ENCODE measurements at regions of chr16 and their contacts with region 1.

Region 1: GRCh38 chr16:46830902-46831647 is at the start of gene C16orf87:
- DNase-seq: peak; percentile 81 to 96 (median 90)
- ATAC-seq: peak; percentile 91
- H3K4me3 ChIP-seq: peak within 1 kb of the TSS; percentile 87
- H3K4me3 Mint-ChIP-seq: peak within 1 kb of the TSS; percentile 98
- H3K27ac ChIP-seq: peak within 1 kb of the TSS; percentile 45 to 61
- H3K27ac Mint-ChIP-seq: peak within 1 kb of the TSS; percentile 89
- H3K4me1 ChIP-seq: peaks cover 11% of the 10 kb centered on the region
- H3K4me1 Mint-ChIP-seq: peaks cover 36% of the 10 kb centered on the region
- H3K27me3 ChIP-seq: no peaks in the 10 kb centered on the region
- H3K27me3 Mint-ChIP-seq: no peaks in the 10 kb centered on the region
- CTCF ChIP-seq: no peak
- total RNA-seq, gene C16orf87: 20.6 to 22.6 TPM

Region 2: DNA sequence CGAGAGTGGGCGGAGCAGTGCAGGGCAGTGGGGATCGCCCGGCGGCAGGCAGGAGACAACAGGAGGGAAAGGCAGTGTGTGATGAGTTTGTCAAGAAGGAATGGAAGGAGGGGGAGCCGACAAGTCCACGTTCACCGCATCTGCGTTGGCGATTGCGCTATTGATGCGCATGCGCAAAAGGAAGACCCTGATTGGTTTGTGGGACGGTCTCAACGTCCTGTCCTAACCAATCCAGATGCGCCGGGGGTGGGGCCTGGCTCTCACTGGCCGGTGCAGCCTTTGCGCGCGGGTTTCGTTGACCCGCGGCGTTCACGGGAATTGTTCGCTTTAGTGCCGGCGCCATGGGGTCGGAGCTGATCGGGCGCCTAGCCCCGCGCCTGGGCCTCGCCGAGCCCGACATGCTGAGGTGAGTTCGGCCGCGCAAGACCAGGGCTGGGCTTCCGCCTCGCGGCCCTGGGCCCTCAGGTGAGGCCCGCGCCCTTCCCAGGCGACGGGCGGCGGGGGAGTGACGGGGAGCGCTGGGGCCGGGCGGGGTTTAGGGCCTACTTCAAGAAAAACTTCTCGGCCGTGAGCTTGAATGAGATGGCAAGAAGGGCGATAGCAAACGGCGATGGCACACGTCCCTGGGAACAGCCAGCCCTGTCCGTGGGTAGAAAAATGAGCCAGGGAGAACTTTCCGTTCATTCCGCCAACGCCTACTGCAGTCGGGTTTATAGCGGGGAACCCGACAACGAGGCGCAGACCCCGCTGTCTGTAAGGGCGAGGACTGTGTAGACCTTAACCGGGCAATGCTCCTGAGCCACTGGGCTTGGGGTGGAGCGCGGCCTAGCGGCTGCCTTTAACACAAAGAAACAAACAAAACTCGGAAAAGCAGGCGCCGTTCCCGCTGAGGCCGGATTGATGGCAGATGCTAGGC is 141.5 kb before region 1 on chr16 and contains the start of gene ORC6:
- CTCF ChIA-PET with region 1: no interaction called
- POLR2A ChIA-PET with region 1: interaction called, 3 read pairs
- intact Hi-C with region 1: loop called (anchors 1 to 2 kb)
- DNase-seq: peak; percentile 92 to 97 (median 96)
- ATAC-seq: peak; percentile 72
- H3K4me3 ChIP-seq: peak within 1 kb of the TSS; percentile 94
- H3K4me3 Mint-ChIP-seq: no peak within 1 kb of the TSS
- H3K27ac ChIP-seq: peak within 1 kb of the TSS; percentile 91 to 98
- H3K27ac Mint-ChIP-seq: no peak within 1 kb of the TSS
- H3K4me1 ChIP-seq: peaks cover 23% of the 10 kb centered on the region
- H3K4me1 Mint-ChIP-seq: peaks cover 33% of the 10 kb centered on the region
- H3K27me3 ChIP-seq: no peaks in the 10 kb centered on the region
- H3K27me3 Mint-ChIP-seq: no peaks in the 10 kb centered on the region
- CTCF ChIP-seq: no peak
- total RNA-seq, gene ORC6: 3.7 to 3.8 TPM

Region 3: GRCh38 chr16:46757339-46758050 is 73.6 kb before region 1 on chr16:
- CTCF ChIA-PET with region 1: no interaction called
- POLR2A ChIA-PET with region 1: no interaction called
- intact Hi-C with region 1: no loop called
- DNase-seq: no peak
- ATAC-seq: no peak
- H3K4me3 ChIP-seq: no peak overlapping the region
- H3K4me3 Mint-ChIP-seq: no peak overlapping the region
- H3K27ac ChIP-seq: no peak overlapping the region
- H3K27ac Mint-ChIP-seq: no peak overlapping the region
- H3K4me1 ChIP-seq: no peaks in the 10 kb centered on the region
- H3K4me1 Mint-ChIP-seq: peaks cover 4% of the 10 kb centered on the region
- H3K27me3 ChIP-seq: no peaks in the 10 kb centered on the region
- H3K27me3 Mint-ChIP-seq: no peaks in the 10 kb centered on the region
- CTCF ChIP-seq: no peak

Region 4: GRCh38 chr16:46777804-46778475 is 53.1 kb before region 1 on chr16:
- CTCF ChIA-PET with region 1: no interaction called
- POLR2A ChIA-PET with region 1: no interaction called
- intact Hi-C with region 1: no loop called
- DNase-seq: no peak
- ATAC-seq: no peak
- H3K4me3 ChIP-seq: no peak overlapping the region
- H3K4me3 Mint-ChIP-seq: no peak overlapping the region
- H3K27ac ChIP-seq: no peak overlapping the region
- H3K27ac Mint-ChIP-seq: no peak overlapping the region
- H3K4me1 ChIP-seq: no peaks in the 10 kb centered on the region
- H3K4me1 Mint-ChIP-seq: no peaks in the 10 kb centered on the region
- H3K27me3 ChIP-seq: no peaks in the 10 kb centered on the region
- H3K27me3 Mint-ChIP-seq: no peaks in the 10 kb centered on the region
- CTCF ChIP-seq: no peak

Region 5: DNA sequence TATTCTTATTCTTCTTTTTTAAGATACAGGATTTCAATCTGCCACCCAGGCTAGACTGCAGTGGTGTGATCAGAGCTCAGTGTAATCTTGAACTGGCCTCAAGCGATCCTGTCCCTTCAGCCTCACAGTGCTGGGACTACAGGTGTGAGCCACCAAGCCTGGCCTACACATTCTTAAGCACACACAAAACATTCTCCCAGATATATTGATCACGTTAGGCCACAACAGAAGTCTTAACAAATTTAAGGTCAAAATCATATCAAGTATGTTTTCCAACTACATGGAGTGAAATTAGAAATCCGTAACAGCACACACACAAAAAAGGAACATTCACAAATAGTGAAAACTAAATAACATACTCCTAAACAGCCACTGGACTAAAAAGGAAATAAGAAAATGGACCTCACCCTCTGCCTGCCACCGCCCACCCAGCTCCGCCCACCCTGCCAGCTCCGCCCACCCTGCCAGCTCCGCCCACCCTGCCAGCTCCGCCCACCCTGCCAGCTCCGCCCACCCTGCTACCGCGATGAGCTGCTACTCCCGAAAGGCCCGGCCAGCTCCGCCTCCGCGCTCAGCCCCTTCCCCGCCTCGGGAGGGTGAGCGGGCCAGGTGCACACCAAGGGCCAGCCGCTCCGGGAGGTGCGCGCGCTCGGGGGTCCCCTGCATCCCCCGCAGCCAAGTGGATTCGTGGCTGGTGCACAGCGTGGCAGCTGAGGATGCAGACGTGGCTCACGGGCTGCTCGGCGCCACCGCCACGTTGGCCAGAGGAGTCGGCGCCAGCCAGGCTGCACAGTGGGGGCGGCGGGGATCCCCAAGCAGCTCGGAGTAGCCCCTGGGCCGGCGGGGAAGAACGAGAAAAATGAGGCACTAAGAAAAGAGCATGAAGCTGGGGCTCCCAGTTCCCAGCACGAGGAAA is 41.3 kb before region 1 on chr16:
- CTCF ChIA-PET with region 1: interaction called, 4 read pairs
- POLR2A ChIA-PET with region 1: interaction called, 32 read pairs
- intact Hi-C with region 1: loop called (anchors 1 to 2 kb)
- DNase-seq: peak; percentile 66 to 88 (median 77)
- ATAC-seq: peak; percentile 97
- H3K4me3 ChIP-seq: peak overlapping the region; percentile 68
- H3K4me3 Mint-ChIP-seq: peak overlapping the region; percentile 79
- H3K27ac ChIP-seq: peak overlapping the region in 1 of 2 donors; percentile 48
- H3K27ac Mint-ChIP-seq: peak overlapping the region; percentile 30
- H3K4me1 ChIP-seq: peaks cover 11% of the 10 kb centered on the region
- H3K4me1 Mint-ChIP-seq: peaks cover 19% of the 10 kb centered on the region
- H3K27me3 ChIP-seq: no peaks in the 10 kb centered on the region
- H3K27me3 Mint-ChIP-seq: no peaks in the 10 kb centered on the region
- CTCF ChIP-seq: no peak

Region 6: DNA sequence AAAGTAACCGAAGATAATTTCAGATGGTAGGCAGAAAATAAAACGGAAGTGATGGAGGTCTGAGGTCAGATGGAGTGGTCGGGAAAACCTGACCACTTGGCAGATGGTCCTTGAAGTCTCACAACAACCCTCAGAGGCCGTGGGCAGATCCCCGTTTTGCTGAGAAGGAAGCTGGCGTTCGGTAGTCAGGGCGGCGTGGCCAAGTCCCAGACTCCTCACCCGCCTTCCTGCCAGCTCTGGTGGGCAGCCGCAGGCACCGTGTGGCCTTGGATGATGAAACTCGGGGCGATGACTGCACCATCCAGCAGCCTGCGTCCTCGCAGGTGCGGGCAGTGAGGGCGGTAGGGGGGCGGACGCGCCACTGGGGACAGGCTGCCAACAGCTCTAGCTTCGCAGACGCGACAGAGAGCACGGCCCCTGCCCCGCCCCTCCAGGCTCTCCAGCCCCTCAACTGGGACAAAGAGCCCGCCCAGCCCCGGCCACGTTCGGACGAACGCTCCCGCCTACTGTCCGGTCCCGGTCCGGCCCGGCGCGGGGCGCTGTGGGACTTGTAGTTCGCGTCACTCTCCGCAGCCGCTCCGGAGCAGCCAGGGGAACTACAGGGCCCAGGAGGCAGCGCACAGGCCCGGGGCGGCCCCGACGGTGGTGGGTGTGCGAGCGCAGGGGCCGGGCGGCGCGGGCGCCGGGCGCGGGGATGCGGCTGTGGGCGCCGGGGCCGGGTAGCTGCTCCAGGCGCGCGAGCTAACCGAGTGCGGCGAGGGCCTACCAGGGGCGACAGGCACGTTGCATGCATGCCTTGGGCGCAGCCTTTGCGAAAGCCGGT is 52.8 kb after region 1 on chr16 and contains the start of gene GPT2:
- CTCF ChIA-PET with region 1: no interaction called
- POLR2A ChIA-PET with region 1: interaction called, 5 read pairs
- intact Hi-C with region 1: loop called in 1 of 2 experiments (anchors 5 kb)
- DNase-seq: peak; percentile 35 to 81 (median 55)
- ATAC-seq: peak; percentile 91
- H3K4me3 ChIP-seq: peak within 1 kb of the TSS; percentile 58
- H3K4me3 Mint-ChIP-seq: peak within 1 kb of the TSS; percentile 88
- H3K27ac ChIP-seq: no peak within 1 kb of the TSS
- H3K27ac Mint-ChIP-seq: no peak within 1 kb of the TSS
- H3K4me1 ChIP-seq: peaks cover 12% of the 10 kb centered on the region
- H3K4me1 Mint-ChIP-seq: peaks cover 17% of the 10 kb centered on the region
- H3K27me3 ChIP-seq: peaks cover 0 to 6% of the 10 kb centered on the region in 2 experiments
- H3K27me3 Mint-ChIP-seq: peaks cover 13% of the 10 kb centered on the region
- CTCF ChIP-seq: no peak
- total RNA-seq, gene GPT2: 0.47 TPM in 1 of 2 experiments, not detected in the other

Region 7: DNA sequence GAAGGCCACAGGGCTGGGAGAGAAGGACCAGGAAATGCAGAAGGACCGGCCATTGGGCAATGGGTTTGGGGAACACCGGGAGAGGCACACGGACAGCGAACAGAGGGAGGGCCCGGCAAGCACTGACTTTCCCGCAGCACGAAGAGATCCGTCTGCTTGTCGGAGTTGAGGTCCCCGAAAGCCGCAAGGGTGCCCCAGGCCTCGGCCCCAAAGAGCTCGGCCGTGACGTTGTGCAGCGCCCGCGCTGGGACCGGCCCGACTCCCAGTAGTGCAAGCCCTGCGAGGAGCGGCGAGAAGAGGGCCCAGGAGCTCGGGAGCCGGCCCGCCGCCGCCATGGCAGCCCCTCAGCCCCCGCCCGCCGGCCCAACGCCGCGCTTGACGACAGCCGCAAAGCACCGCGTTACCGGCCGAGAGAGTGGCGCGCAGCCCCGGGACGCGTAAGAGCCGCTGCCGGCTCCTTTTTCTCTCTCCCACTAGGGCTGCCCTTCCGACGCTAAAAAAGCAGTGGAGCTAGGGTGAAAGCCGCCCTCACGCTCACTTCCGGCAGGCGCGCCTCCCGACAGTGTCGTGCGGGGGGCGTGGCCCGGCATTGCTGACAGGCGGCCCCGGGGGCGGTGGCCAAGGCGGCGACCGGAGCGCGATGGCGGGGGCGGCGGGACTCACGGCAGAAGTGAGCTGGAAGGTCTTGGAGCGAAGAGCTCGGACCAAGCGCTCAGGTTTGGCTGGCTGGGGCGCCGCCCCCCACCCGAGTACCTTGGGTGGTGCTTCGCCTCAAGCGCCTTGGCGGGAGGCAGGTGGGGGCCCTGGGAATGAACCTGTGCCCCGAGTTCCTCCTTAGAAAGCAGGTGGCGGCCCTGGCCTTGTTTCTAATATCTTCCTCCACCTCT is 629.9 kb after region 1 on chr16 and contains the starts of genes ITFG1 and PHKB:
- CTCF ChIA-PET with region 1: interaction called, 3 read pairs
- POLR2A ChIA-PET with region 1: no interaction called
- intact Hi-C with region 1: loop called in 1 of 2 experiments (anchors 1 kb)
- DNase-seq: peak; percentile 89 to 98 (median 94)
- ATAC-seq: peak; percentile 96
- H3K4me3 ChIP-seq: peak within 1 kb of the TSS; percentile 79
- H3K4me3 Mint-ChIP-seq: peak within 1 kb of the TSS; percentile 89
- H3K27ac ChIP-seq: peak within 1 kb of the TSS; percentile 87 to 93
- H3K27ac Mint-ChIP-seq: peak within 1 kb of the TSS; percentile 87
- H3K4me1 ChIP-seq: peaks cover 26% of the 10 kb centered on the region
- H3K4me1 Mint-ChIP-seq: peaks cover 70% of the 10 kb centered on the region
- H3K27me3 ChIP-seq: no peaks in the 10 kb centered on the region
- H3K27me3 Mint-ChIP-seq: no peaks in the 10 kb centered on the region
- CTCF ChIP-seq: no peak
- total RNA-seq, gene ITFG1: 18.0 to 18.5 TPM
- total RNA-seq, gene PHKB: 28.8 to 31.3 TPM

Region 8: DNA sequence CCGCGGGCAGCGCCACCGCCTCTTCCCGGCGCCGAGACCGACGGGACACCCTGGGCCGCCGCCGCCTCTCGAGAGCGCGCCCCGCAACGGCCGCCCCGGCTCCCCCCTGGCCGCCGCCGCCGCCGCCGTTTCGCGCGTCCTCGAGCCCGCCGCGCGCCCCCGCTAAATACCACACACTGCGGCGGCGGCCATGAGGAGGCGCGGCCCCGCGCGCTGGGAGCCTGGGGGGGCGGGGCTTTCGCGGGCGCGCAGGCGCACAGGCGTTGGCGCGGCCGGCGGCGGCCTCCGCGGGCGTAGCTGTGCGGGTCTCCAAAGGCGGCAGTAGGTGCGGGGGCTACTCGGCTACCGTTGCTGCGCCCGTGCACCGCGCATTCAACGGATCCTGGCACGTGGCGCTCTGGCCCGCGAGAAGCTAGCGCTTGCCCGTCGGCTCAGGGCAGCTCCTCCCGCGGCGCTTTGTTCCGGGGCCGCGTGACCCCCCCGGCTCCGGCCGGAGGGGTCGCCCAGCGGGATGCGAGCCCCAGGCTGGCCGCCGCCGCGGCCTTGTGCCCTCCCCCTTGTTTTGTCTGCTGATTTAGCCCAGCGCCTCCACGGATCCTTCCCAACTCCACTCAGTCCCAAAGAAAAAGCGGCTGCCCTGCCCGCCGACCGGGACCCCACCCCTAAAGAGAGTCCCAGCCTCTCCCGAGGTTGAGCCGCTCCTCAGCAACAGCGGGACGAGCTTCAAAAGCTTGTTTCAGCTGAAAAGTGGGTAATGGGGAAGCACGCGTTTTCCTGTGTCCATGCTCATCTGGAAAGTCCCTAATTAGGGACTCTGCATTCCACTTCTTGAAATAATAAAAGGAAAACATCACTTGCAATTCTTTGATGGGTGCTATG is 1554.4 kb after region 1 on chr16 and contains the start of gene SIAH1:
- CTCF ChIA-PET with region 1: no interaction called
- POLR2A ChIA-PET with region 1: no interaction called
- intact Hi-C with region 1: loop called in 1 of 2 experiments (anchors 5 kb)
- DNase-seq: peak; percentile 73 to 96 (median 86)
- ATAC-seq: peak; percentile 80
- H3K4me3 ChIP-seq: peak within 1 kb of the TSS; percentile 81
- H3K4me3 Mint-ChIP-seq: peak within 1 kb of the TSS; percentile 98
- H3K27ac ChIP-seq: peak within 1 kb of the TSS in 1 of 2 donors; percentile 46
- H3K27ac Mint-ChIP-seq: peak within 1 kb of the TSS; percentile 92
- H3K4me1 ChIP-seq: peaks cover 12% of the 10 kb centered on the region
- H3K4me1 Mint-ChIP-seq: peaks cover 27% of the 10 kb centered on the region
- H3K27me3 ChIP-seq: no peaks in the 10 kb centered on the region
- H3K27me3 Mint-ChIP-seq: no peaks in the 10 kb centered on the region
- CTCF ChIP-seq: no peak
- total RNA-seq, gene SIAH1: 40.9 to 43.0 TPM